Activated CD4-positive, alpha-beta T cell treated with anti-CD3 and anti-CD28 coated beads, Interleukin-2, amount 10 ng/mL, durations not matched to agents 24 days and 14 days (primary cell): ENCODE measurements at regions of chr7 and their contacts with region 1.

Region 1: GRCh38 chr7:100428967-100429636 is 529 bp upstream of the MEPCE start:
- DNase-seq: peak; percentile 100
- H3K4me3 Mint-ChIP-seq: peak overlapping the region; percentile 95
- H3K27ac Mint-ChIP-seq: peak overlapping the region; percentile 97
- H3K4me1 Mint-ChIP-seq: peaks cover 43% of the 10 kb centered on the region
- H3K27me3 Mint-ChIP-seq: peaks cover 11% of the 10 kb centered on the region

Region 2: DNA sequence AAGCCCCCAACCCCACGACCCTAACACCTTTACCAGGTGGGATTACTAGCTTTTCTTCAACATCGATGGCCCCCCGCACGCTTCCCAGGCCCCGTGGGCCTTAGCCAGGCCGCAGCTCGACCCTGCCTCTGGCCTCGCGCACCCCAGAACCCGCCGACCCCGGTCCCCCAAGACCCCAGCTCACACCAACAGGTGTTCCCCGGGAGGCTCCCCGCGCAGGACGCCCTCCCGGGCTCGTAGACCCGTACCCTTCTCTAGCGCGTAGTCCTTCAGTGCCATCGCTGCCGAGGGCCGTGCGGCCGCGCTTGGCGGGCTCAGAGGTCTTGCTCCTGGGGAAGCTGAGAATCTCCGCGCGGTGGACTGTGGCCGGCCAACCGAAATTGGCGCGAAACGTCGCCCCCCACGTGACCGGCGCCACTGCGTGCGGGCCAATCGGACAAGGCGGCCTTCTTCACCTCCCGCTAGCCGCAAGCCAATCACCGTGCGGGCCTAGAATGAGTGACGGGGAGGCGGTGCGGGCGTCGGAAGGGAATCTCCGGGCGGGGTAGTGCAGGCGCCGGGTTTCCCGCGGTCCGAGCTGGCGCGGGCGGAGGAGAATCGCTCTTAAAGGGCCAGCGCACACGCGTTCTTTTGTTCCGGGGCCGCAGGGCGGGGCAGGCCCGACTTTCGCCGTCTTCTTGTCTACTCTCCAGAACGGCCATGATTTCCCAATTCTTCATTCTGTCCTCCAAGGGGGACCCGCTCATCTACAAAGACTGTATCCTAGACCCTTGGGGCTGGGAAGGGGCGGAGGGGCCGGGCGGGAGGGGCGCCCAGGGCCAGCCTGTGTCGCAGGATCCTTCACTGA is 327.9 kb before region 1 on chr7 and contains the starts of genes AP4M1 and MCM7:
- intact Hi-C with region 1: loop called (anchors 1 kb)
- DNase-seq: peak; percentile 99
- H3K4me3 Mint-ChIP-seq: peak within 1 kb of the TSS; percentile 94
- H3K27ac Mint-ChIP-seq: peak within 1 kb of the TSS; percentile 94
- H3K4me1 Mint-ChIP-seq: peaks cover 35% of the 10 kb centered on the region
- H3K27me3 Mint-ChIP-seq: no peaks in the 10 kb centered on the region
- total RNA-seq, gene AP4M1: 13.5 and 16.4 TPM in 2 replicates
- total RNA-seq, gene MCM7: 464 and 469 TPM in 2 replicates

Region 3: DNA sequence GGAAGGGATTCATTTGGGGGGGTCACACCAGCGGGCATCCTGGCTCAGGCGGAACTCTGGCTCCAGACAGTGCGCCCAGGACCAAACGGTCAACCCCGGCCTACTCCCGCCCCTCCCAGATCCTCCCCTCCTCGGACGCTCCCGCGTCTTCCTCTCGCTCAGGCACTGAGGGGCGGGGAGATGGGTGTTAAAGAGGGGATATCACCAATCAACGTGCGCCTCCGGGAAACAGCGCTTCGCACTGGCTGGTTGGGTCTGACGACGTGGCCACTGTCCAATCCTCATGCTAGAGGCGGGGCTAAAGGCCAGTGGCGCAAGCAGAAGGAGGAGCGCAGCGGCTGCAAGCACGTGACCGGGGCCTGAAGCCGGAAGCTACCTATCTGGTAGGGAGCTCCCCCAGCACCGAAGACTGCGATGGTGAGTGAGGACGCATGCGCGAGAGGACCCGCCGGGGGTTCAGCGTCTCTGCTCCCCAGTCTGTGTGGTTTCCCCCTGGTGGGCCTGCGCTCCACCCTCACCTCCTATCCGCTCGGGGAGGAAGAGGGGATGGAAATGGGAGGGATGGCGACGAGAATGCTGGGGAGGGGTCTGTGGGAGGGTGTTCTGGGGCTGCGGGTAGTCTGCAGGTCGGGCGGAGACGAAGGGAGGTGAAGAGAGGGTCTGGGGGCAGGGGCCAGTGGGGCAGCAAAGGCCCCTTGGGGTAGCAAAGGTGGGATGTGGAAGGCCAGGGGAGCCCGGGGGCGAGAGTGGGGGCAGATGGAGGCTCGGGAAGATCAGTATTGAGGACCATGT is 280.3 kb before region 1 on chr7 and contains the start of gene LAMTOR4:
- intact Hi-C with region 1: loop called (anchors 5 kb)
- DNase-seq: peak; percentile 100
- H3K4me3 Mint-ChIP-seq: peak within 1 kb of the TSS; percentile 99
- H3K27ac Mint-ChIP-seq: peak within 1 kb of the TSS; percentile 99
- H3K4me1 Mint-ChIP-seq: peaks cover 33% of the 10 kb centered on the region
- H3K27me3 Mint-ChIP-seq: no peaks in the 10 kb centered on the region
- total RNA-seq, gene LAMTOR4: 123 and 126 TPM in 2 replicates

Region 4: GRCh38 chr7:100396421-100396982 is 32.6 kb before region 1 on chr7:
- intact Hi-C with region 1: loop called (anchors 1 kb)
- DNase-seq: peak; percentile 87
- H3K4me3 Mint-ChIP-seq: peak overlapping the region; percentile 33
- H3K27ac Mint-ChIP-seq: peak overlapping the region; percentile 78
- H3K4me1 Mint-ChIP-seq: peaks cover 19% of the 10 kb centered on the region
- H3K27me3 Mint-ChIP-seq: peaks cover 59% of the 10 kb centered on the region

Region 5: DNA sequence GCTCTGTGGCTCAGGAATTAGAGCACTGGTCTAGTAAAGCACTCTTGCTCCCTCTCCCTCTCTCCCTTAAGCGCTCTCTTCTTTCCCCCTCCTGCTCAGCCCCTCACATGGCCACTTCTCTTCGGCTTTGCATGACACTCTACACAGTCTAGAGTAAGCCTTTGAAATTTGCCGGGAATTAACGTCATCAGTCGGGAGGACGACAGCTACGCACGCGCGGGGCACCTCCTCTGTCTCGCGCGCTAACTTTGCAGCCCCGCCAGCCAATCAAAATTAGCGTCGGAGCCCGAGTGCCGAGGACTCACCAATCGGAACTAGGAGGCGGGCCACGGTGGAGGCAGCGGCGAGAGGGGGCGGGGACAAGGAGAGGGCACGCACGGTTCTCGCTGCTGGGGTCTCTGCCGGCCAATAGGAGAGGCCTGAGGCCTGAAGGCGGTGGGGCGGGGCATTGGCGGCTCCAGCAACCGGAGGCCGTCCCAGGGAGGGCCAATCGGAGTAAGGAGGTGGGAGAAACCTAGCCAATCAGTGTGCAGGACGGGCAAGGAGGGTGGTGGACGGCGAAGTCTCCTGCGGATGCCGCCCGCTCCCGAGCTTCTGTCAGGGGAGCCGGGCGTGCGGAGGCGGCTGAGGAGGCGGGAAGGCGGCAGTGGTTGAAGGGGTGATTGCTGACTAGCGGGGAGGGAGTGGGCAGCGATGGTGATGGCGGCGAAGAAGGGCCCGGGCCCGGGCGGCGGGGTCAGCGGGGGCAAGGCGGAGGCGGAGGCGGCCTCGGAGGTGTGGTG is 109.7 kb after region 1 on chr7 and contains the start of gene AGFG2:
- intact Hi-C with region 1: loop called (anchors 2 kb)
- DNase-seq: peak; percentile 100
- H3K4me3 Mint-ChIP-seq: peak within 1 kb of the TSS; percentile 99
- H3K27ac Mint-ChIP-seq: peak within 1 kb of the TSS; percentile 99
- H3K4me1 Mint-ChIP-seq: peaks cover 46% of the 10 kb centered on the region
- H3K27me3 Mint-ChIP-seq: no peaks in the 10 kb centered on the region
- total RNA-seq, gene AGFG2: 112 and 114 TPM in 2 replicates

Region 6: GRCh38 chr7:100874577-100875355 is 445.7 kb after region 1 on chr7 and contains the start of gene SRRT:
- intact Hi-C with region 1: loop called (anchors 10 kb)
- DNase-seq: peak; percentile 100
- H3K4me3 Mint-ChIP-seq: peak within 1 kb of the TSS; percentile 98
- H3K27ac Mint-ChIP-seq: peak within 1 kb of the TSS; percentile 98
- H3K4me1 Mint-ChIP-seq: peaks cover 50% of the 10 kb centered on the region
- H3K27me3 Mint-ChIP-seq: no peaks in the 10 kb centered on the region
- total RNA-seq, gene SRRT: 300 and 318 TPM in 2 replicates

Region 7: DNA sequence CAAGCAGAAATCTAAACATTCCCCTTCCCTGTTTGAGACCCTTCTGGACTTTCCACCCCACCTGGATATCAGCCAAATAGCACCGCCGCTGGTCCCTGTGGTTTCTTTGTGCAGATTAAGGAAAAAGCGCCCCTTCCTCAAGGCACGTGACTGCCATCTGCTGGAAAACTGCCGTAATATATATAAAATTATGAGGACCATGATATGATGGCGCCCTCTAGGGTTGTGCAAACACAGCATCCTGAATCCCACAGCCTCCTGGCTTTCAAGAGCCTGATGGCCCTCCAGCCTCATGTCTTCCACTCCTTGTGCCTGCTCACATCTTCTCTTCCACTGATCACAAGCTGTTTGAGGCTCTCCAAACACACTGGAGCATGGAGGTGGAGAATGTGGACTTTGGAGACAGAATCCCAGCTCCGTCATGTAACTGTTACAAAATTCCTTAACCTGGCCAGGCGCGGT is 1078.7 kb after region 1 on chr7:
- intact Hi-C with region 1: no loop called
- DNase-seq: peak; percentile 86
- H3K4me3 Mint-ChIP-seq: peak overlapping the region; percentile 58
- H3K27ac Mint-ChIP-seq: no peak overlapping the region
- H3K4me1 Mint-ChIP-seq: peaks cover 19% of the 10 kb centered on the region
- H3K27me3 Mint-ChIP-seq: peaks cover 7% of the 10 kb centered on the region